ENCODE measurements at regions of chr15 and their contacts with region 1.

Region 1: DNA sequence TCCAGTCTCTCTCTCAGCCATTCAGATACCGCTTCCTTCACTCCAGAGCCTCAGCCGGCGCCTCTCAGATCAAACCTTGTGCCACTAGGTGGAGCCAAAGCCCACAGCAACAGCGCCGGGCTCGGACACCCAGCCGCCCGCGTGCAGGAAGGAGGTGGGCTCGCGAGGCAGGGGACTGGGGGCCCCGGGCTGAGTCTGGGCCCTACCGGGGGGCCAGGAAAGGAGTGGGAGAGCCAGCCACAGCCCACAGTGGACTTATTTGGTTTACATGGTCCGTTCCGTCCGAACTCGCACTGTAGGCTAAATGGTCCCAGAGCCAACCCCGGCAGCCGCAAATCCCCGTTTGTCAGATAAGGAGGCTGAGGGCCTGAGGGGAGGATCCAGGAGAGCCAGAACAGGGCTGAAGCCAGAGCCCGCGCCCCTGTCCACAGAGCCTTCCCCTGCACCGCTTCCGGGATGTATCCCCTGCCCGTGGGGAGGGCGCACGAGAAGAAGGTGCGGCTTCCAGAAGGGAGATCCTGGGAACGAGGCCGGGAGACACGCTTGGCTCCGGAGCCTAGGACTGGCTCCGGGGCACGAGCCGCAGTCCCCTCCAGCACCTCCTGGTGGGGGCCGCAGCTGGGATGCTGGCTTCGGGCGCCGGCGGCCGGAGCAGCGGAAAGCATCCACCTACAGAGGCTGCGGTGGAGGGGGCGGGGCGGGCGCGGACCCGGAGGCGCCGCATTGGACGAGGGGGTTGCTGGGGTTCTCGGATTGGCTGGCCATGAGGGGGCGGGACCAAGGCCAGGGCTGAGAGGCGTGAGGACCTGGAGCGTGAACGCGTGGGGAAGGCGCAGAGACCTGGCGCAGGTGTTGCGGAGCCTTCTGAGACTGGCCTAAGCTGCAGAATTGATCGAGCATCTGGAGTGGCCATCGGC is 6.5 kb upstream of the CYP11A1 start:
- DNase-seq: peak; percentile 94 to 97 (median 96)
- H3K4me3 ChIP-seq: peak overlapping the region; percentile 37 to 65 (median 57)
- H3K27ac ChIP-seq: no peak overlapping the region
- H3K4me1 ChIP-seq: peaks cover 0 to 12% (median 6%) of the 10 kb centered on the region in 3 donors
- H3K27me3 ChIP-seq: no peaks in the 10 kb centered on the region
- CTCF ChIP-seq: peak; percentile 91

Region 2: DNA sequence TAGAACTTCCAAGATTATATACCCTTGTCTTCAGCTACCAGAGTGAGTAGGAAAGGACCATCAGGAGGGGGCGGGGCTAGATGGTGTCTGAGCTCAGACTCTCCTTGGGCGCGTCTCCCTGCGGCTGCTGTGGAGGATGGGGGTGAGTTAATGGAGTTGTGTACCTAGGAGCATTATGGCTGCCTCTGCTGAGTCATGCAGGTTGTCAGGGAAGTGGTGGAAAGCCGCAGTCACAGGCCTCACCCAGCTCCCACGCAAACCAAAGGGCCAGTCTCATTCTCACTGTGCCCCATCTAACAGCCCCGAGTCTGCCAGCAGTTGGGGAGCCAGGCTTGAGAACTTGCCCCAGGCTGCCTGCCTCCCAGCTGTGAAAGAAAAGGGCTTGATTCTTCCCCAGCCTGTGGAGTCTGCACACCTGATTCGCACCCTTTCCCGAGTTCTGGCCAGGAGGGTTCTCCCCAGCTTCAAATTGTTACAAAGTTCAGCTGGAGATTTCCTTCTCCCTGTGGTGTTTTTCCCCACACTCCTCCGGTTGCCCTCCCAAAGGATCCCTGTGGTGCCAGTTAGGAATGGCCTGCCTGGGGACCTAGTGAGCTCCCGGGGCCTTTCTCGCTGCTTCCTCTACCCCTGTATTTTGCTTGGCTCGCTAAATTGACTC is 1148.5 kb before region 1 on chr15:
- intact Hi-C with region 1: no loop called
- DNase-seq: no peak
- H3K4me3 ChIP-seq: no peak overlapping the region
- H3K27ac ChIP-seq: no peak overlapping the region
- H3K4me1 ChIP-seq: no peaks in the 10 kb centered on the region
- H3K27me3 ChIP-seq: no peaks in the 10 kb centered on the region
- CTCF ChIP-seq: no peak

Region 3: DNA sequence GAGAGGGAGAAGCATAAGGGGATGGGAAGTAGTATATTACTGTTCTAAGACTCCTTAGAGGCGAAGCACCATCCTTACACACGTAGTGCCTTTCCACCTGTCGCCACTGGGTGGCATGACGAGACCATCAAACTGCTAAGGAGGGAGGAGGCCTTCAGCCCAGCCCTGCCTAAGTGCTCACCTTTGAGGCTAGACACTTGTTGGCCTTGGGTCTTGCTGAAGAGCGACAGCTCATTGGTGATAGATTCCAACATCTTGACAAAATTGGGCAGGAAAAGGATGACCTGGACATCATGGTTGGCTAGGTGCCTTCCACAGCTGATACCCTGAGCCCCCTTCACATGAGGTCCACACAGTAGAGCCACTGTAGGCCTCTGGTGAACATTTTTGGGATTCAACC is 261.2 kb after region 1 on chr15:
- intact Hi-C with region 1: loop called (anchors 10 kb)
- DNase-seq: peak in 4 of 5 donors; percentile 61 to 80 (median 70)
- H3K4me3 ChIP-seq: no peak overlapping the region
- H3K27ac ChIP-seq: no peak overlapping the region
- H3K4me1 ChIP-seq: no peaks in the 10 kb centered on the region
- H3K27me3 ChIP-seq: no peaks in the 10 kb centered on the region
- CTCF ChIP-seq: peak; percentile 93

Measured in kidney (tissue), 22 donors.